PC-9 (cell line): ENCODE measurements at regions of chr3 and their contacts with region 1.

Region 1: GRCh38 chr3:194486540-194487288 is at the start of gene ATP13A3:
- DNase-seq: peak; percentile 80 to 93
- H3K4me3 ChIP-seq: peak within 1 kb of the TSS; percentile 64
- H3K27ac ChIP-seq: peak within 1 kb of the TSS; percentile 96
- H3K4me1 ChIP-seq: peaks cover 71% of the 10 kb centered on the region
- H3K27me3 ChIP-seq: no peaks in the 10 kb centered on the region
- CTCF ChIP-seq: no peak
- total RNA-seq, gene ATP13A3: 203 and 242 TPM in 2 replicates

Region 2: DNA sequence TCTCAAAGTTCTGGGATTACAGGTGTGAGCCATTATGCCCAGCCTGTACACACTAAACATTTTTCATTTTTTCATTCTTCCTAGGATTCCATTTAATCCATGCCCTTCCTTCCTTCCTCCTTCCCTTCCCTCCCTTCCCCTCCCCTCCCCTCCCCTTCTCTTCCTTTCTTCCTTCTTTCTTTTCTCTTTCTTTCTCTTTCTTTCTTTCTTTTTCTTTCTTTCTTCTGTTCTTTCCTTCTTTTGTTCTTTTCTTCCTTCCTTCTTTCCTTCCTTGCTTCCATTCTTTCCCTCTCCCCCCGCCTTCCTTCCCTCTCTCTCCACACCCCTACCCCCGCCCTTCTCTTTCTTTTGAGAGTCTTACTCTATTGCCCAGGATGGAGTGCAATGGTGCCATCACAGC is 41.0 kb after region 1 on chr3:
- CTCF ChIA-PET with region 1: interaction called, 11 read pairs
- POLR2A ChIA-PET with region 1: interaction called, 4 read pairs
- intact Hi-C with region 1: loop called (anchors 1 kb)
- DNase-seq: no peak
- H3K4me3 ChIP-seq: no peak overlapping the region
- H3K27ac ChIP-seq: peak overlapping the region; percentile 95
- H3K4me1 ChIP-seq: peaks cover 27% of the 10 kb centered on the region
- H3K27me3 ChIP-seq: no peaks in the 10 kb centered on the region
- CTCF ChIP-seq: no peak

Region 3: GRCh38 chr3:194556086-194557056 is 69.7 kb after region 1 on chr3:
- CTCF ChIA-PET with region 1: interaction called, 3 read pairs
- POLR2A ChIA-PET with region 1: interaction called, 12 read pairs
- intact Hi-C with region 1: loop called (anchors 1 kb)
- DNase-seq: peak in 1 of 2 experiments; percentile 46
- H3K4me3 ChIP-seq: no peak overlapping the region
- H3K27ac ChIP-seq: no peak overlapping the region
- H3K4me1 ChIP-seq: peaks cover 8% of the 10 kb centered on the region
- H3K27me3 ChIP-seq: no peaks in the 10 kb centered on the region
- CTCF ChIP-seq: no peak

Region 4: DNA sequence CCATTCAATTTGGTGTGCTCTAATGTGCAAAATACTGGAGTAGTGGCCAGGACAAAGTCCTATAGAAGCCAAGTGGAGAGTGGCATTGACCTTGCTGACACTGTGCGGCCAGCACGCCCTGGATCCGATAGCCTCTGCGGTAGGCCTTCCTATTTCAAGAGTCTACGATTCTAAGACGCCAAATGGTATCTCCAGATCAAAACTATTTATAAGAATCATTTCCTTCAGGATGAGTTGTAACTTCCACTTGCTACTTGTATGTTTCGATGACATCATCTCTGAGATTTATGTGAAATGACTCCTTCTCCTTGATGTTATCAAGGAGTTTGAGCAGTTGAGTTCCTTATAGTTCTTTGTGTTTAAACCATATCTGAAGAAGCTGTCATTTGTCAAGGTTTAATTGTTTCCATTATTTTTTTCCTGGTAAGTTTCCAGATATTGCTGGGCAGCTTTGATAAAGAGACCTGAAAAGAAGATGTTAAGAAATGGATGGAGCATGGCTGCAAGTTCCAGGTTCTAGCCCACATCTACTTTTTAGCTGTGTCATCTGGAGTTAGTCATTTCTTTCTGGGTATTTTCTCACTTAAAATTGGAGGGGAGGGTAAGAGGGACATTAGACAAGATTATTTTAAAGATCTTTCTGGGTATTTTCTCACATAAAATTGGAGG is 74.7 kb after region 1 on chr3:
- CTCF ChIA-PET with region 1: no interaction called
- POLR2A ChIA-PET with region 1: interaction called, 12 read pairs
- intact Hi-C with region 1: loop called (anchors 1 kb)
- DNase-seq: peak; percentile 69 to 96
- H3K4me3 ChIP-seq: no peak overlapping the region
- H3K27ac ChIP-seq: peak overlapping the region; percentile 69
- H3K4me1 ChIP-seq: peaks cover 17% of the 10 kb centered on the region
- H3K27me3 ChIP-seq: no peaks in the 10 kb centered on the region
- CTCF ChIP-seq: no peak

Region 5: DNA sequence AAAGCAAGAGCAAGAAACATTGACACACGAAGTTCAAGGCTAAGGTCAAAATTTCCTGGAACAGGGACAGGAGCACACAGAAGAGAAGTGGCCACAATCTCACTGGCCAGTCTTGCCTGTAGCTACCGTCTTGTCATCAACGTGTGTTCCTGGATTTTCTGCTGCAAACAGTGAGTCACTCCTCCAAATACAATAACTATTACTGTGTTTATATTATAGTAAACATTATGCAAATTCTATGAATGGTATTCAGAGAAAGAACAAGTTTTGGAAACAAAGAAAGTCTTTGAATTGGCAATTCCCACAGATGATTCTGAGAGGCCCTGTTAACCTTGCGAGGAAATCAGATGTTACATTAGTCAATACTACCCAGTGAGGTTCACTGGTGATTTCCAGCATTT is 419.5 kb after region 1 on chr3:
- CTCF ChIA-PET with region 1: no interaction called
- POLR2A ChIA-PET with region 1: no interaction called
- intact Hi-C with region 1: no loop called
- DNase-seq: peak in 1 of 2 experiments; percentile 79
- H3K4me3 ChIP-seq: no peak overlapping the region
- H3K27ac ChIP-seq: no peak overlapping the region
- H3K4me1 ChIP-seq: peaks cover 15% of the 10 kb centered on the region
- H3K27me3 ChIP-seq: peaks cover 2% of the 10 kb centered on the region; the same call in 1 of the 2 replicates
- CTCF ChIP-seq: no peak